ENCODE measurements at regions of chr7 and their contacts with region 1.

Region 1: GRCh38 chr7:8536431-8536830 is 103.0 kb downstream of the NXPH1 start:
- DNase-seq: no peak
- ATAC-seq: no peak
- H3K4me3 ChIP-seq: no peak overlapping the region
- H3K27ac ChIP-seq: no peak overlapping the region
- H3K4me1 ChIP-seq: no peaks in the 10 kb centered on the region
- H3K27me3 ChIP-seq: no peaks in the 10 kb centered on the region

Region 2: DNA sequence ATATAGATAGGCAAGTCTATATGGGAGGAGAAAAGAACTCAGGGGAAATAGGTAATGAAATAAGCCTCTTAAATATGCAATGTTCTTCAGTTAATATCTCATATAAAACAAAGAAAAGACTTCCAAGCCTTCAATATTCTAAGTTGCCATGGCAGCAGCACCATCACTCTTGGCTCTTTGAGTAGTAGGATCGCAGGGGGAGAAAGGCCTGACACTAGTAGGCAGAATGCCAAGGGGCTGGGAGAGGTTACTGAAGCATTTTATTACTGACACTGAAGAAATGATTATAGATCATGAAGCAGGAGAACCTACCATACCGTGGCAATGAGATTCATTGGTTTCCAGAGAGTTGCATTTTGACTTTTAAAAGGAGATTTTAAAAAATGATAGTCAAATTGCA is 90.9 kb after region 1 on chr7:
- intact Hi-C with region 1: loop called in 1 of 4 experiments (anchors 10 kb)
- DNase-seq: no peak
- ATAC-seq: no peak
- H3K4me3 ChIP-seq: no peak overlapping the region
- H3K27ac ChIP-seq: no peak overlapping the region
- H3K4me1 ChIP-seq: no peaks in the 10 kb centered on the region
- H3K27me3 ChIP-seq: no peaks in the 10 kb centered on the region